AG04449 (cell line): ENCODE measurements at regions of chr3 and their contacts with region 1.

Region 1: DNA sequence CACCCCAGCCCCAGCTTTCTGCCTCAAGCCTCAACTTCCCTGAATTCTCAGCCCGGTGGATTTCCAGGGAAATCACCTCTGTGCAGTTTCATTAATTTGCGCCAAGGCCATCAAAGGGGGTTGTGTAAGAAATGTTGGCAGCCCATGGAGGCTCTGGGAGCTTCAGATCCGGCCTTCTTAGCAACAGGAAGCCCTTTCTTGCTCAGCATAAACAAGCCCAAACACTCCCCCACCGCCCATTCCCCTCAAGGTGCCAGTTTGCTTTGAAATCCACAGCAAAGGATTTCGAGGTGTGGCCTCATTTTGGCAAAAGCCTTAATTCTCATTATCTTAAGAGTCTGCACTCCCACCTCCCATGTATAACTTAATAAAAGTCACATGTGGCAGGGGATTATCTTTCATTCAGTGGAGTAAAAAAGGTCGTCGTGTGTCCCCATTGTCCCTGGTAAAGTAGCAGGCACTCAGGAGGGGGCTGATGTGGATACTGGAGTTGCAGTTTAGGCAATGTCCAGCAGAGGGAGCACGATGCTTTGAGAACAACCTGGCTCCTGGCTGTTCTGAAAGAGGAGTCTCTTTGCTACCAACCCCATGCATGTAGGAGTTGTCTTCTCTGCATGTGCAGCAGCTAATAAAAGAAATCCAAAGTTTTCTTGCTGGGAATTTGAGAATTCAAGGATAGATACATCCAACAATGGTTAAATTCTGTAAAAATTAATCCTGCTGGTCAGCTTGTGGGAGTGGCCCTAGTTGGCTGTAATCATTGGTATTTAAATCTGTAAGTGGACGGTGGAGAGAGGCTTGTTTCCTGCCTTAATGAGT is 39.5 kb downstream of the EBLN2 start:
- DNase-seq: peak; percentile 26
- H3K4me3 ChIP-seq: no peak overlapping the region
- CTCF ChIP-seq: peak; percentile 93

Region 2: DNA sequence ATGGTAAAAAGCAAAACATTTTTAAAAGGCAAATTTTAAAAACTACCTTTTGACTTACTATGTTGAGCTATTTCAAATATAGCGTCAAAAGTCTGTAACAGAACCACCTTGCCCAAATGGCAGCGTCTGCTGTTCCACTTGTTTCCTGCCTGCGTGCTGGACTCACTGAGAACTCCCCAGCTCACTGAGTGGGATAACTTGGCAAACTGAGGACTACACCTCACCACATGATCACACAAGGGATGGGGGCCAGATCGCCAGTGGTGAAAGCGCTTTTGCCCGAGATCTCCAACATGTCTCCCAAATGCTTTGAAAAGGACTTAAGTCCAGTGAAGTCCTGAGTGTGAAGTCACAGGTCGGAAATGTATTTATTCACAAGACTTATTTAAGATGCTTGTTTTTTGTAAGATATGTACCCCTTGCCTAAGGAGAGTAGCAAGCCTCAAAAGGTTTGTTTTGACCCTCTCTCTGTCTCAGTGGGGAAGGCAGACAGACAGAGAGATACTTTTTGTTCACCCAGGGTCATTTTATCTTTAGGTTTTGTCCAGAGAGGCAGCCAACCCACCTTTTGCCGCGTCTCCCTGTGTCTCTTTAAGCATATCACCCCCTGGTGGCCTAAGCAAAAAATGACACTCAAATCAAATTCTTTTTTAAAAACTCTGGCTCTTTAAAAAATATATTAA is 331.2 kb after region 1 on chr3:
- CTCF ChIA-PET with region 1: interaction called, 43 read pairs
- POLR2A ChIA-PET with region 1: no interaction called
- DNase-seq: no peak
- H3K4me3 ChIP-seq: no peak overlapping the region
- CTCF ChIP-seq: peak; percentile 55

Region 3: DNA sequence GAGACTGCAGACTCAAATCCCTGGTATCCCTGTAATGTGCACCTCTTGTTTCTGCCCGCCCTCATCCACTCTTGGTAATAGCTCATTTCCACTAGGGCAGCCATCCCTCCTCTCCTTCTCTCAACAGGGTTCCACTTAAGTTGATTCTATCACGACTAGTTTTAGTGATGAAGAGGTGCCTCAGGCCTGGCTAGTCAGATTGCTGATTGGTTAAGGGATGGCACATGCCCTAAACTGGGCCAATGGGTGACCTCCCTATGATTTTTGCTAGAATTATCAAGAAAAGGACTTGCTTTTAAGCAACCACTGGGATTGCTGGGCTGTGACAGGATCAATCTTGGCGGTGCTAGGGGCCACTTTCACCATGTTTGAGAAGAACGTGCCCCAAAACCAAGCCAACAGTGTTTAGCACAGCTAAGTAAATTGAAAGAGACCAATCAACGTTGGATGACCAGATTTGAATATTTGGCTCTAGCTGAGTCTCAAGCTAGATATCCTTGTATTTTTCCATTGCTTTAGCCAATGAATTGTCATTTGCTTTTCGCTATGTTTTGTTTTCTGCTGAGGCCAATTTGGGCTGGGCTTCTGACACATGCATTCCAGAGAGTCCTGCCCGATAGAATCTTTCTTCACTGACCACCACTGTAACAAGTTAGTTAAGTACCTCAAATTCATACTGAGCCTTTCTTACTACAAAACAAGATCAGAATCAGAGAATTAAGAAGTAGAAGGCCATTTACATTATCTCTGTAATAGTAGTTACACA is 392.8 kb after region 1 on chr3:
- CTCF ChIA-PET with region 1: interaction called, 13 read pairs
- POLR2A ChIA-PET with region 1: no interaction called
- DNase-seq: no peak
- H3K4me3 ChIP-seq: no peak overlapping the region
- CTCF ChIP-seq: no peak

Region 4: GRCh38 chr3:73502609-73503583 is 401.9 kb after region 1 on chr3:
- CTCF ChIA-PET with region 1: interaction called, 101 read pairs
- POLR2A ChIA-PET with region 1: no interaction called
- DNase-seq: peak; percentile 77
- H3K4me3 ChIP-seq: no peak overlapping the region; the same call in 1 of the 2 replicates
- CTCF ChIP-seq: peak; percentile 70

Region 5: DNA sequence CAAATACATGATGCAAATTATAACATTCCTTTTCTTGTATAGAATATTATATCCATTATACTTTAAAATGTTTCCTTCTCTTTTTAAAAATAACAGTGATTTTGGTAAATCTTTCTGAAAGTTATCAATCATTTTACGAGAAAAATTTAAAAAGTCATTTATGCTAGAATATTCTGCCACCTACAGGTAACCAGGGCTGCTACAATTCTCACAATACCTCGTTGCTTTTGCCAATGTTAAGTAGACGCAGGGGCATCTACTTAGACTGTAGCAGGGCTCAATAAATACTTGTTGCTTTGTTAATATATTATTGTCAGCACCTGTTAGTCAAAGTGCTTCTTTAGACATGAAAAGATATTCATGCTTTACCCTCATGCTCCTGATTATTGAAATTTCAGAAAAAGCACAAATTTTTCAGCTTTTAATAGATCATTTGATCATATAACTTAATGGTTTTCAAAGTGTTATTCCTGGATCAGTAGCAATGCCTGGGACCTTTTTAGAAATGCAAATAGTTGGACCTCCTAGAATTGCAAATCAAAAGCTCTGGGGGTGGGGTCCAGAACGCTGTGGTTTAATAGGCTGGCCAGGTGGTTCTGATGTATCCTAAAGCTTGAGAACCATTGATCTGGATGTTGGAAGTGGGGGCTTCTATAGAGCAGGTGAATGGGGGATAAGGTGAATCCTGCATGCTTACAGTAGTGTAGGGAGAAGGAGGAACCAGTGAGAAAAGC is 747.4 kb after region 1 on chr3:
- CTCF ChIA-PET with region 1: interaction called, 11 read pairs
- POLR2A ChIA-PET with region 1: no interaction called
- DNase-seq: no peak
- H3K4me3 ChIP-seq: no peak overlapping the region
- CTCF ChIP-seq: peak; percentile 54